ENCODE measurements at regions of chr1 and their contacts with region 1.

Region 1: GRCh38 chr1:175154629-175155472 is 37.7 kb downstream of the KIAA0040 start:
- DNase-seq: peak; percentile 77
- ATAC-seq: peak; percentile 28
- H3K4me3 Mint-ChIP-seq: no peak overlapping the region
- H3K27ac Mint-ChIP-seq: no peak overlapping the region
- H3K4me1 Mint-ChIP-seq: peaks cover 19% of the 10 kb centered on the region
- H3K27me3 Mint-ChIP-seq: peaks cover 19% of the 10 kb centered on the region
- CTCF ChIP-seq: peak; percentile 82

Region 2: DNA sequence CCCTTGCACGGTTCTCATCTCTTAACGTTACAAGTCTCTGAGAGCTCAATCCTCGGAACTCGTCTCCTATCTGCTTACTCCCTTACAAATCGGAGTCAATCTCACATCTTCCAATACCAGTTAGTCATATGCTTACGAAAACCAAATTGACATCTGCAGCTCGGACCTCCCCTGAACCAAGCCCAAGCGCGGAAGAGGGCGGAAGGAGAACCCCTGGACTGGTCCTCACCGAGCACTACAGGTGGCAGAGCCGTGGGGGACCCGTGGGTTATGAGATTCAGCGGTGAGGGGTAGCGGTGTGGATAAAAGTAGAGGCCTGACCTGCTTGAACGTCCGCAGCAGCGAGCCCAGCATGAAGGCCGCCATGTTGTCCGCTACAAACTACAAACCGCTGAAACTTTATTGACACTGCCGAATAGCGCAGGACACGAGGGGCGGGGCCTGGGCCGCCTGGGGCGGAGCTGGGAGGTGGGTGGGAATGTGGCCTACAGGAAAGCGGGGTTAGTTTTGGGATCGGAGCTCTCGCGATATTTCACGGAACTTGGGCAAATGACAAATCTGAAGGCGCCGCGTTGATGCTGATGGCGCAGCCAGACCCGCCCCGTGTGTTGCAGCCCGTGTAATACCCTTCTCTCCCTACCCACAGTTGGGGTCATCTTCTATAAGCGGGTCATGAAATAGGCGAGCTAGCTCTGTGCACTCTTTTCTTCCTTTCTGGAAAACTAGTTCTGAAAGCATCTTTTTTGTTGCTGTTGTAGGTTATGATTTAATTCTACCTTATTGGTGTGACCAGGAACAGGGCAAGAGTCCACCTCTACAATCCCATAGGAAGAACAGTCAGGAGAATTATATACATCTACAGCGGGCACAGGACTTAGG is 131.6 kb before region 1 on chr1 and contains the start of gene MRPS14:
- CTCF ChIA-PET with region 1: interaction called, 84 read pairs
- POLR2A ChIA-PET with region 1: interaction called, 3 read pairs
- DNase-seq: peak; percentile 99
- ATAC-seq: peak; percentile 97
- H3K4me3 Mint-ChIP-seq: peak within 1 kb of the TSS; percentile 98
- H3K27ac Mint-ChIP-seq: peak within 1 kb of the TSS; percentile 97
- H3K4me1 Mint-ChIP-seq: peaks cover 4% of the 10 kb centered on the region
- H3K27me3 Mint-ChIP-seq: no peaks in the 10 kb centered on the region
- CTCF ChIP-seq: no peak
- total RNA-seq, gene MRPS14: 30.4 to 33.1 TPM (median 32.1 TPM) in 3 replicates

Region 3: GRCh38 chr1:175129997-175130648 is 24.7 kb before region 1 on chr1:
- CTCF ChIA-PET with region 1: interaction called, 69 read pairs
- POLR2A ChIA-PET with region 1: no interaction called
- DNase-seq: peak; percentile 36
- ATAC-seq: peak; percentile 85
- H3K4me3 Mint-ChIP-seq: peak overlapping the region; percentile 13
- H3K27ac Mint-ChIP-seq: peak overlapping the region; percentile 95
- H3K4me1 Mint-ChIP-seq: peaks cover 52% of the 10 kb centered on the region
- H3K27me3 Mint-ChIP-seq: no peaks in the 10 kb centered on the region
- CTCF ChIP-seq: no peak

Region 4: GRCh38 chr1:175192630-175193526 is 38.0 kb after region 1 on chr1 and contains the start of gene KIAA0040:
- CTCF ChIA-PET with region 1: interaction called, 21 read pairs
- POLR2A ChIA-PET with region 1: no interaction called
- DNase-seq: peak; percentile 72
- ATAC-seq: peak; percentile 86
- H3K4me3 Mint-ChIP-seq: peak within 1 kb of the TSS; percentile 90
- H3K27ac Mint-ChIP-seq: peak within 1 kb of the TSS; percentile 27; the same call in 1 of the 2 replicates
- H3K4me1 Mint-ChIP-seq: peaks cover 16% of the 10 kb centered on the region
- H3K27me3 Mint-ChIP-seq: peaks cover 25% of the 10 kb centered on the region
- CTCF ChIP-seq: no peak
- total RNA-seq, gene KIAA0040: 8.8 to 15.0 TPM (median 11.9 TPM) in 3 replicates

Region 5: GRCh38 chr1:175287377-175287776 is 132.5 kb after region 1 on chr1:
- CTCF ChIA-PET with region 1: interaction called, 11 read pairs
- POLR2A ChIA-PET with region 1: no interaction called
- DNase-seq: no peak
- ATAC-seq: peak; percentile 65
- H3K4me3 Mint-ChIP-seq: no peak overlapping the region
- H3K27ac Mint-ChIP-seq: no peak overlapping the region
- H3K4me1 Mint-ChIP-seq: no peaks in the 10 kb centered on the region
- H3K27me3 Mint-ChIP-seq: peaks cover 4% of the 10 kb centered on the region; the same call in 1 of the 2 replicates
- CTCF ChIP-seq: no peak

Region 6: GRCh38 chr1:175338387-175339135 is 183.7 kb after region 1 on chr1:
- CTCF ChIA-PET with region 1: interaction called, 18 read pairs
- POLR2A ChIA-PET with region 1: no interaction called
- DNase-seq: peak; percentile 85
- ATAC-seq: peak; percentile 96
- H3K4me3 Mint-ChIP-seq: no peak overlapping the region
- H3K27ac Mint-ChIP-seq: no peak overlapping the region
- H3K4me1 Mint-ChIP-seq: peaks cover 28% of the 10 kb centered on the region
- H3K27me3 Mint-ChIP-seq: peaks cover 4% of the 10 kb centered on the region
- CTCF ChIP-seq: peak; percentile 84

Region 7: DNA sequence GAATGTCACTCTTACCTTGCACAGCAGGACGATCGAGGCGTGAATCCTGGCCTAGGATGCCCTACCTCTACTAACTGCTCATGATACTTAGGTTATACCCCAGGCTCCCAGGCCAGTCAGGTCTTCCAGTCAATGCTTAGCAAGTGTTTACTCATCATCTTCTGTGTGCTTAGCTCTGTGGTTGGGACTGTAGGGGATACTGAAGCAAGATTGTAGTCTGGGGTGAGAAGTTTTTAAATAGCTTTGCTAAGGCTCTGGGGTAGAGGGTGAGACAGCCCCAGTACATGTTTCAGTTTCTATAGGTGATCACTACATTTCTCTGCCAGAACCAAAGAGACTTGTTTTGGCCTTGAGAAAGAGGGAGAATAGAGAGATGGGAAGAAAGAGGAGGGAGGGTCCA is 288.5 kb after region 1 on chr1:
- CTCF ChIA-PET with region 1: no interaction called
- POLR2A ChIA-PET with region 1: no interaction called
- DNase-seq: no peak
- ATAC-seq: no peak
- H3K4me3 Mint-ChIP-seq: no peak overlapping the region
- H3K27ac Mint-ChIP-seq: no peak overlapping the region
- H3K4me1 Mint-ChIP-seq: no peaks in the 10 kb centered on the region
- H3K27me3 Mint-ChIP-seq: no peaks in the 10 kb centered on the region
- CTCF ChIP-seq: no peak

Region 8: DNA sequence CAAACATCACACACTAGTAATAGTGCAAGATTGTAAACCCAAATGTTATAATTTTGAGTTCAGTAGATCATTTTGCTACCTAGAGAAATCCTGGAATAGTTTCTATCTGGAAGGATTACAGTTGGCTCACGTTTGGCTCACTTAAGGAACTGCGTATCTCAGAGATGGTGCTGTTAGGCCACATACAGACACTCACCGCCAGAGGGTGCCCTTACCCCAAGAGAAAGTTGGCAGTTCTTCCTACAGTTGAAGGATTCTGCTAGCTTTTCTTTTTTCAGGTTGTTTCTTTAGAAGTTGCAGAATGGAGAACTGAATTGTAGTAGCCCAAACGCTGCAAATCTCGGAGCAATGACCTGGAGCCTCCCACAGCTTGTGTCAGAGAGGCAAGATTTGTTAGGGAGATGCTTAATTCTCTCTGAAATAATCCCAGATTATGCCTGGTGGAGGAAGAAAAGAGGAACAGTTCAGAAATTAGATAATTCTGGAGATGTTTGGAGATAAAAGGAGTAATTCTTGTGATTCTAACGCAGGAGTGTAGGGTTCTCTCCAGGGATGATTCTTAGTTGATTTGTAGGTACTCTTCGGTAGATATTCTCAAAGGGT is 1220.2 kb after region 1 on chr1:
- CTCF ChIA-PET with region 1: no interaction called
- POLR2A ChIA-PET with region 1: interaction called, 11 read pairs
- DNase-seq: peak; percentile 88
- ATAC-seq: peak; percentile 98
- H3K4me3 Mint-ChIP-seq: no peak overlapping the region
- H3K27ac Mint-ChIP-seq: no peak overlapping the region
- H3K4me1 Mint-ChIP-seq: no peaks in the 10 kb centered on the region
- H3K27me3 Mint-ChIP-seq: no peaks in the 10 kb centered on the region; the same call in 1 of the 2 replicates
- CTCF ChIP-seq: peak; percentile 74